Activated naive CD4-positive, alpha-beta T cell treated with anti-CD3 and anti-CD28 coated beads for 36 hours (primary cell): ENCODE measurements at regions of chr16 and their contacts with region 1.

Region 1: GRCh38 chr16:51982715-51983680 is 563.9 kb downstream of the TOX3 start:
- DNase-seq: peak; percentile 49
- H3K4me3 Mint-ChIP-seq: no peak overlapping the region
- H3K27ac Mint-ChIP-seq: no peak overlapping the region
- H3K4me1 Mint-ChIP-seq: no peaks in the 10 kb centered on the region
- H3K27me3 Mint-ChIP-seq: no peaks in the 10 kb centered on the region

Region 2: GRCh38 chr16:51818342-51818944 is 164.6 kb before region 1 on chr16:
- CTCF ChIA-PET with region 1: interaction called, 3 read pairs
- intact Hi-C with region 1: loop called (anchors 5 kb)
- DNase-seq: peak; percentile 36
- H3K4me3 Mint-ChIP-seq: no peak overlapping the region
- H3K27ac Mint-ChIP-seq: no peak overlapping the region
- H3K4me1 Mint-ChIP-seq: no peaks in the 10 kb centered on the region
- H3K27me3 Mint-ChIP-seq: peaks cover 4% of the 10 kb centered on the region